ENCODE measurements at regions of chr17 and their contacts with region 1.

Region 1: DNA sequence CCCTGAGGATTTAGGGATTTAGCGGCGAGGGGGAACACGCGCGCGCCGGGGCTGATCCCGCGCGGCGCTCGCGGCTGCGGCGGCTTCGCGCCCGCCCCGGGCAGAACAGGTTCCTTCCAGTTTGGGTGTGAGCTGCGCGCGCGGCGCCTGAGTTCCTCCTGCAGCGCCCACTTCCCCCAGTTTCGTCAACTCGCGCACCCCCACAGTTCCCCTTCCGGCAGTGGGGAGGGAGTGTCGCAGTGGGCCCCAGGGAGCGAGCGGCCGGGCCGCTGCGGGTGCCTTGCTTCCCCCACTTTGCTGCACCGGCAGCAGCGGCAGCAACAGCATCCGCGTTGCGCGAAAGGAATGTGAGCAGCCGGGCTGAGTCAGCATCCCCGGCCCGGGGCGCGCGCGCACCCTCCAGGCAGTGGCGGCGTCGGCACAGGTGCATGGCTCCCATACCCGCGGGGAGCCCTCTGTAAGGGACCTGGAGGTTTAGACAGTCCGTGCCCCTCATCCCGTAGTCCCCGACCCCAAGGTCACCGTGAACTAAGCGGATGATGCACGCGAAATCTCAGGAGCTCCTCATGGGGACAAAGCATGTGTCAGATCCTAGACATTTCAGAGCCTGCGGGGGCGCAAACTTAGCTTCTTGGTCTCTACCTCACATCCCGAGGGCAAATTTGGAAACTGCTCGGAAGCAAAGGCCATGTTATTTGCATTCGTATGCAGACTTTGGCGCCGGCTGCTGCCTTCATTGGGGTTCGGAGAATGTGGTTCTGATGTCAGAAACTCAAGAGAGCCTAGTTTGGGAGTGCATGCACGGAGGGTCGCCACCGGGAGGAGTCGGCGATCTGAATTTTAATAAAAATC is 775 bp downstream of the ARSG start:
- DNase-seq: peak; percentile 97
- ATAC-seq: peak; percentile 78
- H3K4me3 ChIP-seq: peak overlapping the region; percentile 47 to 74 (median 61)
- H3K4me3 Mint-ChIP-seq: peak overlapping the region; percentile 95
- H3K27ac ChIP-seq: peak overlapping the region; percentile 86 to 89
- H3K27ac Mint-ChIP-seq: peak overlapping the region; percentile 94
- H3K4me1 ChIP-seq: peaks cover 31 to 43% of the 10 kb centered on the region in 2 donors
- H3K4me1 Mint-ChIP-seq: peaks cover 46% of the 10 kb centered on the region
- H3K27me3 ChIP-seq: no peaks in the 10 kb centered on the region
- H3K27me3 Mint-ChIP-seq: no peaks in the 10 kb centered on the region
- CTCF ChIP-seq: no peak

Region 2: GRCh38 chr17:68035523-68036303 is 256.4 kb before region 1 on chr17 and contains the start of gene KPNA2:
- CTCF ChIA-PET with region 1: no interaction called
- POLR2A ChIA-PET with region 1: no interaction called
- intact Hi-C with region 1: loop called (anchors 1 kb)
- DNase-seq: peak; percentile 96
- ATAC-seq: peak; percentile 88
- H3K4me3 ChIP-seq: peak within 1 kb of the TSS; percentile 68 to 98 (median 88)
- H3K4me3 Mint-ChIP-seq: peak within 1 kb of the TSS; percentile 95
- H3K27ac ChIP-seq: peak within 1 kb of the TSS; percentile 75 to 77
- H3K27ac Mint-ChIP-seq: peak within 1 kb of the TSS; percentile 67
- H3K4me1 ChIP-seq: peaks cover 7 to 9% of the 10 kb centered on the region in 2 donors
- H3K4me1 Mint-ChIP-seq: peaks cover 11% of the 10 kb centered on the region
- H3K27me3 ChIP-seq: no peaks in the 10 kb centered on the region
- H3K27me3 Mint-ChIP-seq: no peaks in the 10 kb centered on the region
- CTCF ChIP-seq: no peak
- total RNA-seq, gene KPNA2: 20.0 and 21.2 TPM in 2 replicates

Region 3: GRCh38 chr17:68247445-68248198 is 44.4 kb before region 1 on chr17 and contains the start of gene AMZ2:
- CTCF ChIA-PET with region 1: interaction called, 3 read pairs
- POLR2A ChIA-PET with region 1: interaction called, 20 read pairs
- intact Hi-C with region 1: loop called (anchors 5 kb)
- DNase-seq: peak; percentile 99
- ATAC-seq: peak; percentile 89
- H3K4me3 ChIP-seq: peak within 1 kb of the TSS; percentile 24 to 81 (median 76)
- H3K4me3 Mint-ChIP-seq: peak within 1 kb of the TSS; percentile 96
- H3K27ac ChIP-seq: peak within 1 kb of the TSS; percentile 96 to 98
- H3K27ac Mint-ChIP-seq: peak within 1 kb of the TSS; percentile 99
- H3K4me1 ChIP-seq: peaks cover 31 to 34% of the 10 kb centered on the region in 2 donors
- H3K4me1 Mint-ChIP-seq: peaks cover 54% of the 10 kb centered on the region
- H3K27me3 ChIP-seq: no peaks in the 10 kb centered on the region
- H3K27me3 Mint-ChIP-seq: no peaks in the 10 kb centered on the region
- CTCF ChIP-seq: no peak
- total RNA-seq, gene AMZ2: 70.7 and 74.3 TPM in 2 replicates

Region 4: DNA sequence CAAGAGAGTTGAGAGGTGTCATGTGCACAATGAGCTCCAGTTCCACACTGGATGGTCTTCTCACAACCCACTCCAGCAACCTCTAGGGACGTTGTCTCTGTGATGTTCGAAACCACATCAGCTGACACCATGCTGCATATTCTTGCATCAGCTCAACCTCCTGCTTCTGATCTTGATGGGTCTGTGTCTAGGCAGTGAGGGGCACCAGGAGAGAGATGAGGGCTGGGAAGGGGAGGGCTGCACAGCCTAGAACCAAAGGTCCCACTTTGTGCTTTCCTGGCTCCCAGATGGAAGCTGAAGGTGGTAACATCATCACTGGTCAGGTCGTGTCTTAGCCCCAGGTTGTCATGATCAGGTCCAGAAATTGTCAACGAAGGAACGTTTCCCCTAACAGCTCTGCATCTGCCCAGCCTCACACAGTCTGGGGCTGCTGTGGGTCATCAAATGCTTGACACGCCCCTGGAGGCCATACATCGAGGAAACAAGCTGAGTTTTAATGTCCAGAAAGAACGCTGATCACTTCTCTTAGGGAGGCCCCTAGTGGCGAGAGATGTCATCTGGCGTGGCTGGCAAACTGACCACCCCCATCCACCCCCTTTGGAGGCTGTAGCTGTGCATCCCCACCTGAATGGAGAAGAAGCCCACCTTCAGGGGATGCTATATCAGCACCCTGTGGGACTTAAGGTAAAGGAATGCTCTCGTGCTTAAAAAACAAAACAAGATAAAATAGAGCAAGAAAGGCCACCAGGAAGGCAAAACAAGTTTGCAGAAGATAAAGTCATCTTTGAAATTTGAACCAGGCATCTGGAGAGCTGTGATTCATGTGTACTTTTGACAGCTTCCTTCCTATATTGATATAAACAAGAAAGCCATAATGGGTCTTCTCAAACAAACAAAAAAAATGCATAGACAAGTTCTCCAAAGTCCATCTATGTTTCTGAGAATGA is 106.9 kb after region 1 on chr17:
- CTCF ChIA-PET with region 1: interaction called, 40 read pairs
- POLR2A ChIA-PET with region 1: interaction called, 5 read pairs
- intact Hi-C with region 1: no loop called
- DNase-seq: peak; percentile 55
- ATAC-seq: peak; percentile 76
- H3K4me3 ChIP-seq: no peak overlapping the region
- H3K4me3 Mint-ChIP-seq: peak overlapping the region; percentile 12
- H3K27ac ChIP-seq: no peak overlapping the region
- H3K27ac Mint-ChIP-seq: peak overlapping the region; percentile 35
- H3K4me1 ChIP-seq: peaks cover 0 to 6% of the 10 kb centered on the region in 2 donors
- H3K4me1 Mint-ChIP-seq: peaks cover 8% of the 10 kb centered on the region
- H3K27me3 ChIP-seq: no peaks in the 10 kb centered on the region
- H3K27me3 Mint-ChIP-seq: peaks cover 3% of the 10 kb centered on the region
- CTCF ChIP-seq: peak; percentile 40

Region 5: GRCh38 chr17:68512247-68512982 is 220.3 kb after region 1 on chr17 and contains the start of gene PRKAR1A:
- CTCF ChIA-PET with region 1: interaction called, 3 read pairs
- POLR2A ChIA-PET with region 1: interaction called, 3 read pairs
- intact Hi-C with region 1: loop called (anchors 2 kb)
- DNase-seq: peak; percentile 98
- ATAC-seq: peak; percentile 75
- H3K4me3 ChIP-seq: peak within 1 kb of the TSS; percentile 62 to 99 (median 85)
- H3K4me3 Mint-ChIP-seq: peak within 1 kb of the TSS; percentile 100
- H3K27ac ChIP-seq: peak within 1 kb of the TSS; percentile 99
- H3K27ac Mint-ChIP-seq: peak within 1 kb of the TSS; percentile 100
- H3K4me1 ChIP-seq: peaks cover 25 to 28% of the 10 kb centered on the region in 2 donors
- H3K4me1 Mint-ChIP-seq: peaks cover 42% of the 10 kb centered on the region
- H3K27me3 ChIP-seq: no peaks in the 10 kb centered on the region
- H3K27me3 Mint-ChIP-seq: no peaks in the 10 kb centered on the region
- CTCF ChIP-seq: no peak
- total RNA-seq, gene PRKAR1A: 296 and 297 TPM in 2 replicates

Region 6: DNA sequence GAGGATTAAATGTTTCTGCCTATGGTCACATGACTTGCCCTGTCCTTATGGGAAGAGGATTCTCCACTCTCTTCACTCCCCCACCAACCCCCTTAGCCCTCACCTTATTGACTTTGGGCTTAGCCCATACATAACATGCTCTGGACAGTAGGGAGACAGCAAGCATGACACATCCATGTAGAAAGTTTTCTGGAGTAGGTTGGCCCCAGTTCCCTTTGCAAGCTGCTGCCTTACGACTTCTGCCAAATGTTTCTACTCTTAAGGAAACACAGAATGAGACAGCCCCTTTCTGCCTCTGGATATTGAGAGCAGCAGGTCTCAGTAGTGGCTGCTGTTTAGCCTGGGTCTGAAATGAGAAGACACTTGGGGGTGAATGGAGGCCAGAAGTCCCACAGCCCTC is 1404.6 kb after region 1 on chr17:
- CTCF ChIA-PET with region 1: no interaction called
- POLR2A ChIA-PET with region 1: no interaction called
- intact Hi-C with region 1: no loop called
- DNase-seq: no peak
- ATAC-seq: no peak
- H3K4me3 ChIP-seq: no peak overlapping the region
- H3K4me3 Mint-ChIP-seq: no peak overlapping the region
- H3K27ac ChIP-seq: no peak overlapping the region
- H3K27ac Mint-ChIP-seq: no peak overlapping the region
- H3K4me1 ChIP-seq: no peaks in the 10 kb centered on the region
- H3K4me1 Mint-ChIP-seq: no peaks in the 10 kb centered on the region
- H3K27me3 ChIP-seq: no peaks in the 10 kb centered on the region
- H3K27me3 Mint-ChIP-seq: no peaks in the 10 kb centered on the region
- CTCF ChIP-seq: no peak